Activated CD4-positive, alpha-beta memory T cell treated with anti-CD3 and anti-CD28 coated beads for 36 hours (primary cell): ENCODE measurements at regions of chr7 and their contacts with region 1.

Region 1: DNA sequence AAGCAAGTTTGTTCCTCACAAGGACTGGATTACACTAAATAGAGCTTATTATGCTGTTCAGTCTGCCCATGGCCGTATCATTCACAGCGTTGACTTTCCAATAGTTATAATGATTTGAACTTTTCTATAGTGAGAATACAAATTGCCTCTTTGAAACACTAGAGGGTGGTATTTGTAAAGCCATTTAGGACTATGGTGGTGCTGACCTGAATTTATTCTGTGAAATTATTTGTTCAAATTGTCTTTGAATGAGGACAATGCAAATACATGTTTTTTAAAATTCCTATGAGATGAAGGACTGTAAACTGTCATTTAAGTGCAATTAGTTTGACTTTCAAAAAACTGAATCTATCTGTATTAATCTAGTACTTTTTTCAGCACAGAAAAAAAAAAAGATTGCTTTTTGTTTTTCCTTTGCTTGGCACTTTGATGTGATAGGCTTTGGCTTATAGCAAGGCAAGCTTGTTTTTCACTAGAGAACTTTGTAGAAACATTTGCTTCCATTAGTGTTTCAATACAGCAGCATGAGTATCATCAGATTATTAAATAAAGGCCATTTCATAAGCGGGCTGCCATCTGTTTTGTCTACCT is 122.7 kb upstream of the TMEM229A start:
- DNase-seq: no peak
- H3K4me3 Mint-ChIP-seq: no peak overlapping the region
- H3K27ac Mint-ChIP-seq: no peak overlapping the region
- H3K4me1 Mint-ChIP-seq: no peaks in the 10 kb centered on the region
- H3K27me3 Mint-ChIP-seq: no peaks in the 10 kb centered on the region

Region 2: GRCh38 chr7:124784879-124785818 is 629.6 kb after region 1 on chr7:
- CTCF ChIA-PET with region 1: no interaction called
- POLR2A ChIA-PET with region 1: no interaction called
- intact Hi-C with region 1: loop called (anchors 2 kb)
- DNase-seq: peak; percentile 30
- H3K4me3 Mint-ChIP-seq: no peak overlapping the region
- H3K27ac Mint-ChIP-seq: no peak overlapping the region
- H3K4me1 Mint-ChIP-seq: no peaks in the 10 kb centered on the region
- H3K27me3 Mint-ChIP-seq: peaks cover 2% of the 10 kb centered on the region

Region 3: GRCh38 chr7:124796769-124797168 is 641.2 kb after region 1 on chr7:
- CTCF ChIA-PET with region 1: no interaction called
- POLR2A ChIA-PET with region 1: no interaction called
- intact Hi-C with region 1: no loop called
- DNase-seq: no peak
- H3K4me3 Mint-ChIP-seq: no peak overlapping the region
- H3K27ac Mint-ChIP-seq: no peak overlapping the region
- H3K4me1 Mint-ChIP-seq: no peaks in the 10 kb centered on the region
- H3K27me3 Mint-ChIP-seq: peaks cover 12% of the 10 kb centered on the region

Region 4: DNA sequence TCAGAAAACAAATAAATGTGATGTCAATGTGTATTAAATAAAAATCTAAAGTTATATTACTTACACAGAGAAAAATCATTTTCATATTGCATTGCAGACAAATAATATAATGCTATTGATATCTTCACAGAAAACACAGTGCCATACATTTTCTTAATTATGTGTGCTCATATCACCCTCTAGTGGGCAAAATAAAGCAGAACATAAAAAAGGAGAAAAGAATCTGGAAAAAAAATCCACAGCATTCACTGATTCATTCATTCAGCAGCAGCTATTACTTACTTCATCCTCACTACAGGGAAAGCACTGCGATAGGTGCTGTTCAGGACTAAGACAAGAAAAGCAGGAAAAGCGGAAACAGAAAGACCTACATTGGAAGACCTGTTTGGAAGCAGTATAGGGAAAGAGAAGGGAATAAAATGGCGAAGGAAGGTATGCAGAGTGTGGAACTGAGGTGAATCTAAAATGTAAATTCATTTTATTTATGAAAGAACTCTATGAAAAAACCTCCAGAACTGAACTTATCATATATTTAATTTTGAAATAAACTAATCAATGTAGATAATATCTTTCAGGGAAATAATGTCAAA is 700.9 kb after region 1 on chr7:
- CTCF ChIA-PET with region 1: no interaction called
- POLR2A ChIA-PET with region 1: no interaction called
- intact Hi-C with region 1: loop called (anchors 2 kb)
- DNase-seq: no peak
- H3K4me3 Mint-ChIP-seq: no peak overlapping the region
- H3K27ac Mint-ChIP-seq: no peak overlapping the region
- H3K4me1 Mint-ChIP-seq: no peaks in the 10 kb centered on the region
- H3K27me3 Mint-ChIP-seq: no peaks in the 10 kb centered on the region